Activated T-helper 1 cell treated with anti-CD3 and anti-CD28 coated beads, Interleukin-12 subunit alpha, Interleukin-12 subunit beta, Interleukin-2, Interleukin-4 antibody, amounts not matched to agents 30 ng/mL and 10 ng/mL and 1 ng/mL, durations not matched to agents 14 hours and 24 hours and 36 hours (primary cell): ENCODE measurements at regions of chr3 and their contacts with region 1.

Region 1: DNA sequence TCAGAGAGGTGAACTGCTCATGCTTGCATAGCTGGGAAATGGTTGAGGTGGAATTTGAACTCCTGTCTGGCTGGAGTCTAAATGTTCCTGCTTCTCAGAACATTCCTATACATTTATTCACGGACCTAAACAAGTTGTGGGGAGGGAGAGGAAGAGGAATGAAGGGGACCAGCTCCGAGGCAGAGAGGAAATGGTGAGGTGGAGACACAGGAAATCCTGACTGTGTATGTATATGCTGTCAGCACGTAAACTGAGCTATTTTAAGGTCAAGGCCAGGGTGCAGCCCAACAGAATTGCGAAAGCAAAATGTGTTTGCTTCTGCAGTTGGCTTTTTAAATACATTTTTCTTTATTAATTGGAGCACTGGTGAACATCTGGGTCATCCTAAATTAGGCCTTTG is 74.1 kb upstream of the POMGNT2 start:
- DNase-seq: peak; percentile 48
- H3K4me3 Mint-ChIP-seq: peak overlapping the region; percentile 36
- H3K27ac Mint-ChIP-seq: peak overlapping the region; percentile 80
- H3K4me1 Mint-ChIP-seq: peaks cover 62% of the 10 kb centered on the region
- H3K27me3 Mint-ChIP-seq: peaks cover 4% of the 10 kb centered on the region

Region 2: GRCh38 chr3:43162230-43163084 is 17.6 kb before region 1 on chr3:
- intact Hi-C with region 1: loop called (anchors 2 kb)
- DNase-seq: peak; percentile 53
- H3K4me3 Mint-ChIP-seq: peak overlapping the region; percentile 72
- H3K27ac Mint-ChIP-seq: peak overlapping the region; percentile 83
- H3K4me1 Mint-ChIP-seq: peaks cover 23% of the 10 kb centered on the region
- H3K27me3 Mint-ChIP-seq: no peaks in the 10 kb centered on the region